ENCODE measurements at regions of chr20 and their contacts with region 1.

Region 1: GRCh38 chr20:52312132-52312729 is 120.7 kb upstream of the ZFP64 start:
- DNase-seq: peak; percentile 60
- ATAC-seq: no peak
- H3K4me3 ChIP-seq: no peak overlapping the region
- H3K4me3 Mint-ChIP-seq: no peak overlapping the region
- H3K27ac ChIP-seq: no peak overlapping the region
- H3K27ac Mint-ChIP-seq: no peak overlapping the region
- H3K4me1 ChIP-seq: no peaks in the 10 kb centered on the region
- H3K4me1 Mint-ChIP-seq: no peaks in the 10 kb centered on the region
- H3K27me3 ChIP-seq: no peaks in the 10 kb centered on the region
- H3K27me3 Mint-ChIP-seq: peaks cover 35% of the 10 kb centered on the region
- CTCF ChIP-seq: peak; percentile 81

Region 2: GRCh38 chr20:51934301-51935002 is 377.8 kb before region 1 on chr20:
- CTCF ChIA-PET with region 1: no interaction called
- POLR2A ChIA-PET with region 1: no interaction called
- intact Hi-C with region 1: no loop called
- DNase-seq: no peak
- ATAC-seq: no peak
- H3K4me3 ChIP-seq: no peak overlapping the region
- H3K4me3 Mint-ChIP-seq: no peak overlapping the region
- H3K27ac ChIP-seq: no peak overlapping the region
- H3K27ac Mint-ChIP-seq: no peak overlapping the region
- H3K4me1 ChIP-seq: no peaks in the 10 kb centered on the region
- H3K4me1 Mint-ChIP-seq: no peaks in the 10 kb centered on the region
- H3K27me3 ChIP-seq: no peaks in the 10 kb centered on the region
- H3K27me3 Mint-ChIP-seq: no peaks in the 10 kb centered on the region
- CTCF ChIP-seq: no peak

Region 3: GRCh38 chr20:52242237-52243230 is 69.7 kb before region 1 on chr20:
- CTCF ChIA-PET with region 1: no interaction called
- POLR2A ChIA-PET with region 1: no interaction called
- intact Hi-C with region 1: loop called (anchors 2 kb)
- DNase-seq: peak; percentile 29
- ATAC-seq: no peak
- H3K4me3 ChIP-seq: no peak overlapping the region
- H3K4me3 Mint-ChIP-seq: no peak overlapping the region
- H3K27ac ChIP-seq: no peak overlapping the region
- H3K27ac Mint-ChIP-seq: no peak overlapping the region
- H3K4me1 ChIP-seq: no peaks in the 10 kb centered on the region
- H3K4me1 Mint-ChIP-seq: no peaks in the 10 kb centered on the region
- H3K27me3 ChIP-seq: peaks cover 0 to 4% (median 0%) of the 10 kb centered on the region in 4 experiments
- H3K27me3 Mint-ChIP-seq: peaks cover 22% of the 10 kb centered on the region
- CTCF ChIP-seq: peak; percentile 89

Region 4: DNA sequence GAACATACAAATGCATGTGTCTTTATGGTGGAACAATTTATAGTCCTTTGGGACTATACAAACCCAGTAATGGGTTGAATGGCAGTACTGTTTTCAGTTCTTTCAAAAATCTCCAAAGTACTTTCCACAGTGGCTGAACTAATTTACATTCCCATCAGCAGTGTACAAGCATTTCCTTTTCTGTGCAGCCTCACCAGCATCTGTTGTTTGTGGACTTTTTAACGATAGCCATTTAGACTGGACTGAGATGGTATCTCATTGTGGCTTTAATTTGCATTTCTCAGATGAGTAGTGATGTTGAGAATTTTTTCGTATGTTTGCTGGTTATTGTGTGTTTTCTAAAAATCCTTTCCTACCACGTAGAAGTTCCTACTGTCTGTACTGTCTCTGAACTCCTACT is 206.5 kb after region 1 on chr20:
- CTCF ChIA-PET with region 1: no interaction called
- POLR2A ChIA-PET with region 1: no interaction called
- intact Hi-C with region 1: no loop called
- DNase-seq: no peak
- ATAC-seq: no peak
- H3K4me3 ChIP-seq: no peak overlapping the region
- H3K4me3 Mint-ChIP-seq: no peak overlapping the region
- H3K27ac ChIP-seq: no peak overlapping the region
- H3K27ac Mint-ChIP-seq: no peak overlapping the region
- H3K4me1 ChIP-seq: no peaks in the 10 kb centered on the region
- H3K4me1 Mint-ChIP-seq: no peaks in the 10 kb centered on the region
- H3K27me3 ChIP-seq: no peaks in the 10 kb centered on the region
- H3K27me3 Mint-ChIP-seq: no peaks in the 10 kb centered on the region
- CTCF ChIP-seq: no peak

Region 5: DNA sequence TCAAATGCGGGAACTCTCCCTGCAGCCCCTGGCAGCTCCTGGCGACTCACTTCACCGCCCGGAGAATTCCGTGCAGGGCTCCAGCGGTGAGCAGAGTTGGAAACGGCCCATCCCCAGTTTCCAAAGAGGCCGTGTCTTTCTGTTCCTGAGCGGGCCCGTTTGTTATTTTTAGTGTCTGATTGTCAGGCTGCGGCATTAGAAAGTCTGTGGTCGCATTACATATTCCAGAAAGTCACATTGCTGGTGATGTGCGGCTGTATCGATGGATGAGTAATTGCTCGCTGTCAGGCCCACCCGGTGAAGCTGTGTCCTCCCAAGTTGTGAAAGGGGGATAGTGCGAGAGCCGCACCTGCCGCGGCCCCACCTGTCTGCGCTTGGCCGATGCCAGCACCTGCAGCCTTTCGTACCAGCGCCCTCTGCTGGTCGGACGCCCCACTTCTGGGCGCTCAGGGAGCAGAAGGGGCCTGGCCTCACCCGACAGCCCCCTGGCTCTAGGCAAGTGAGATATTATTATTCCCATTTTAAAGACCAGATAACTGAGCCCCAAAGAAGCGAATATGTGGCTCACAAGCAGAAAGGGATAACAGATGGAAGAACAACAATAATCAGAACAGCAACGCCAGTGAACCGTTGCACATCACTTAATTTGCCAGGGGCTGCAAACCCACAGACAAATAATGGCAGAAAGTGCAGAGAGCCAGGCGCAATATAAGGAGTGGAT is 904.8 kb after region 1 on chr20:
- CTCF ChIA-PET with region 1: interaction called, 38 read pairs
- POLR2A ChIA-PET with region 1: no interaction called
- intact Hi-C with region 1: no loop called
- DNase-seq: peak; percentile 75
- ATAC-seq: peak; percentile 65
- H3K4me3 ChIP-seq: peak overlapping the region in 2 of 5 experiments; percentile 8 to 25
- H3K4me3 Mint-ChIP-seq: peak overlapping the region; percentile 43
- H3K27ac ChIP-seq: no peak overlapping the region
- H3K27ac Mint-ChIP-seq: no peak overlapping the region
- H3K4me1 ChIP-seq: peaks cover 4 to 13% of the 10 kb centered on the region in 2 donors
- H3K4me1 Mint-ChIP-seq: peaks cover 14% of the 10 kb centered on the region
- H3K27me3 ChIP-seq: peaks cover 0 to 9% (median 2%) of the 10 kb centered on the region in 4 experiments
- H3K27me3 Mint-ChIP-seq: peaks cover 14% of the 10 kb centered on the region
- CTCF ChIP-seq: peak; percentile 93

Region 6: DNA sequence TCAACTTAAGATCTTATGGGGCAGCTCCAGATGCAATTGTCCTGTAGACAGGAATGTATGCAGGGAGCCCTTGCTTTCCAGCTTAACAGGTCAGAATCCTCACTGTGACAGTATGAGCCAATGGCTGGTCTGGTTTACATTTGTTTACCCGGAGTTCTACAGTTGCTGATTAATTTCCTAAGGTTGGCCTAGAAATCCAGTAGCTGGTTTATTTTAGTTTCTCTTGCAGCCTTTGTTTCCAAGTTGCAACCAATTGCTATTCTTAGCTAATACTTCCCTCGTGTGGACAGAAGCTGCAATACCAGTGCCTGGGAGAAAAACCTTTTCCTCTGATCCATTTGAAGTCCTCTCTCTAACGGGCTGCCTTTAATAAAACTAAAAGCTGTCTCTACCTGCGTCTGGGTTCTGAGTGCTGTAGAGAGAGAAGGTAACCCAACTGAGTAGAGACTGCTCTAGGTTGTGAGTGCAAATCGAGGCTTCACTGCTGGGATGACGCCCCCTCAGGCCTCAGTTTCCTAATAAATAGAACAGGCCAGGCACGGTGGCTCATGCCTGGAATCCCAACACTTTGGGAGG is 1235.5 kb after region 1 on chr20:
- CTCF ChIA-PET with region 1: interaction called, 12 read pairs
- POLR2A ChIA-PET with region 1: no interaction called
- intact Hi-C with region 1: loop called (anchors 2 kb)
- DNase-seq: peak; percentile 45
- ATAC-seq: no peak
- H3K4me3 ChIP-seq: no peak overlapping the region
- H3K4me3 Mint-ChIP-seq: no peak overlapping the region
- H3K27ac ChIP-seq: no peak overlapping the region
- H3K27ac Mint-ChIP-seq: no peak overlapping the region
- H3K4me1 ChIP-seq: no peaks in the 10 kb centered on the region
- H3K4me1 Mint-ChIP-seq: no peaks in the 10 kb centered on the region
- H3K27me3 ChIP-seq: no peaks in the 10 kb centered on the region
- H3K27me3 Mint-ChIP-seq: no peaks in the 10 kb centered on the region
- CTCF ChIP-seq: peak; percentile 31